ENCODE measurements at regions of chr3 and their contacts with region 1.

Region 1: DNA sequence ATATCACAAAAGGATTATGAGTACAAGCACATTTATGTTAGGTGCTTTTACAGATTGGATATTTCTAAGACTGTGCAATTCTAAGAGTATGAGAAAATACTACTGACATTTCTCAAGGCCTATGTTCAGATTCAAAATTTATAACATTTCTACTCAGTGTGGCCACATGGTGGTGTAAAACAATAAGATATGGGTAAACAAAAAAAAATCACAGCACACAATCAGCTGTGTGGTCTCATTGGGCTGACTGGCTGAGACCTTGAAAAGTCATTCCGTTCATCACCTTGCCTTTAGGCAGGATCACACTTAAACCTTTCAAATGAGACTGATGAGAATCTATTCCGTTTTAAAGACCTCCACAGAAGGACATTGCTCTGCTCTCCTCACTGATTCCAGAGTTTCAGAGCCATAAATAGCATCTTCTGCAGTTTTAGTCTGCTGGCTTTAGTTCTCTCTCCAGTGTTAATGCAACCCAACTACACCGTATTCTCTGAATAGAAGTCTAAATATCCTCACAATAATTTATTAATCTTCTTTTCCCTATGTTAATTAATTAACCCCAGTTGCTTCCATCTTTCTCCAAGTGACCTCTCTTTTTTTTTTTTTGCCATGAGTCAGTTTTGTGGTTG is 158.2 kb downstream of the SPATA16 start:
- DNase-seq: no peak
- H3K4me3 ChIP-seq: no peak overlapping the region
- H3K4me3 Mint-ChIP-seq: no peak overlapping the region
- H3K27ac Mint-ChIP-seq: no peak overlapping the region
- H3K4me1 ChIP-seq: no peaks in the 10 kb centered on the region
- H3K4me1 Mint-ChIP-seq: no peaks in the 10 kb centered on the region
- H3K27me3 ChIP-seq: no peaks in the 10 kb centered on the region
- H3K27me3 Mint-ChIP-seq: peaks cover 8% of the 10 kb centered on the region
- CTCF ChIP-seq: peak; percentile 14 to 17

Region 2: GRCh38 chr3:172814738-172815137 is 168.1 kb before region 1 on chr3:
- CTCF ChIA-PET with region 1: no interaction called
- POLR2A ChIA-PET with region 1: no interaction called
- intact Hi-C with region 1: loop called (anchors 5 kb)
- DNase-seq: no peak
- H3K4me3 ChIP-seq: no peak overlapping the region
- H3K4me3 Mint-ChIP-seq: no peak overlapping the region
- H3K27ac Mint-ChIP-seq: no peak overlapping the region
- H3K4me1 ChIP-seq: no peaks in the 10 kb centered on the region; the same call in 1 of the 2 replicates
- H3K4me1 Mint-ChIP-seq: no peaks in the 10 kb centered on the region
- H3K27me3 ChIP-seq: no peaks in the 10 kb centered on the region
- H3K27me3 Mint-ChIP-seq: no peaks in the 10 kb centered on the region
- CTCF ChIP-seq: no peak

Region 3: GRCh38 chr3:172836390-172836997 is 146.4 kb before region 1 on chr3:
- CTCF ChIA-PET with region 1: no interaction called
- POLR2A ChIA-PET with region 1: no interaction called
- intact Hi-C with region 1: loop called (anchors 10 kb)
- DNase-seq: peak in 1 of 2 experiments; percentile 54
- H3K4me3 ChIP-seq: no peak overlapping the region
- H3K4me3 Mint-ChIP-seq: no peak overlapping the region
- H3K27ac Mint-ChIP-seq: no peak overlapping the region
- H3K4me1 ChIP-seq: no peaks in the 10 kb centered on the region
- H3K4me1 Mint-ChIP-seq: no peaks in the 10 kb centered on the region
- H3K27me3 ChIP-seq: no peaks in the 10 kb centered on the region
- H3K27me3 Mint-ChIP-seq: peaks cover 11% of the 10 kb centered on the region
- CTCF ChIP-seq: peak; percentile 57 to 70

Region 4: GRCh38 chr3:173007079-173007723 is 24.4 kb after region 1 on chr3:
- CTCF ChIA-PET with region 1: no interaction called
- POLR2A ChIA-PET with region 1: no interaction called
- intact Hi-C with region 1: no loop called
- DNase-seq: no peak
- H3K4me3 ChIP-seq: no peak overlapping the region
- H3K4me3 Mint-ChIP-seq: no peak overlapping the region
- H3K27ac Mint-ChIP-seq: no peak overlapping the region
- H3K4me1 ChIP-seq: peaks cover 15% of the 10 kb centered on the region; the same call in 1 of the 2 replicates
- H3K4me1 Mint-ChIP-seq: peaks cover 7% of the 10 kb centered on the region
- H3K27me3 ChIP-seq: no peaks in the 10 kb centered on the region
- H3K27me3 Mint-ChIP-seq: no peaks in the 10 kb centered on the region
- CTCF ChIP-seq: no peak

Region 5: GRCh38 chr3:173045770-173046382 is 63.0 kb after region 1 on chr3:
- CTCF ChIA-PET with region 1: interaction called, 3 read pairs
- POLR2A ChIA-PET with region 1: no interaction called
- intact Hi-C with region 1: loop called (anchors 1 kb)
- DNase-seq: no peak
- H3K4me3 ChIP-seq: no peak overlapping the region
- H3K4me3 Mint-ChIP-seq: no peak overlapping the region
- H3K27ac Mint-ChIP-seq: no peak overlapping the region
- H3K4me1 ChIP-seq: no peaks in the 10 kb centered on the region
- H3K4me1 Mint-ChIP-seq: no peaks in the 10 kb centered on the region
- H3K27me3 ChIP-seq: no peaks in the 10 kb centered on the region
- H3K27me3 Mint-ChIP-seq: peaks cover 9% of the 10 kb centered on the region
- CTCF ChIP-seq: peak; percentile 9 to 12

Region 6: GRCh38 chr3:173275740-173276139 is 292.9 kb after region 1 on chr3:
- CTCF ChIA-PET with region 1: no interaction called
- POLR2A ChIA-PET with region 1: no interaction called
- intact Hi-C with region 1: loop called (anchors 5 kb)
- DNase-seq: no peak
- H3K4me3 ChIP-seq: no peak overlapping the region
- H3K4me3 Mint-ChIP-seq: no peak overlapping the region
- H3K27ac Mint-ChIP-seq: no peak overlapping the region
- H3K4me1 ChIP-seq: no peaks in the 10 kb centered on the region
- H3K4me1 Mint-ChIP-seq: no peaks in the 10 kb centered on the region
- H3K27me3 ChIP-seq: no peaks in the 10 kb centered on the region
- H3K27me3 Mint-ChIP-seq: no peaks in the 10 kb centered on the region
- CTCF ChIP-seq: no peak

Region 7: DNA sequence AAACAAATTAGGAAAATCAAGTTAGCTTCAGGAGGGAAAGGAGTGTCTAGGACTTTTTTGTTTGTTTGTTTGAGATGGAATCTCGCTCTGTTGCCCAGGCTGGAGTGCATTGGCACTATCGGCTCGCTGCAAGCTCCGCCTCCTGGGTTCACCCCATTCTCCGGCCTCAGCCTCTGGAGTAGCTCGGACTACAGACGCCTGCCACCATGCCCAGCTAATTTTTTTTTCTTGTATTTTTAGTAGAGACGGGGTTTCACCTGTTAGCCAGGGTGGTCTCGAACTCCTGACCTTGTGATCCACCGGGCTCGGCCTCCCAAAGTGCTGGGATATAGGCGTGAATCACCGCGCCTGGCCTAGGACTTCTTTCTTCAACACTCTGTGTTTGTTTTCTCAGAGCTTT is 585.8 kb after region 1 on chr3:
- CTCF ChIA-PET with region 1: no interaction called
- POLR2A ChIA-PET with region 1: no interaction called
- intact Hi-C with region 1: loop called (anchors 10 kb)
- DNase-seq: no peak
- H3K4me3 ChIP-seq: no peak overlapping the region
- H3K4me3 Mint-ChIP-seq: no peak overlapping the region
- H3K27ac Mint-ChIP-seq: no peak overlapping the region
- H3K4me1 ChIP-seq: no peaks in the 10 kb centered on the region
- H3K4me1 Mint-ChIP-seq: no peaks in the 10 kb centered on the region
- H3K27me3 ChIP-seq: no peaks in the 10 kb centered on the region
- H3K27me3 Mint-ChIP-seq: peaks cover 4% of the 10 kb centered on the region
- CTCF ChIP-seq: no peak